PC-9 (cell line): ENCODE measurements at regions of chr14 and their contacts with region 1.

Region 1: DNA sequence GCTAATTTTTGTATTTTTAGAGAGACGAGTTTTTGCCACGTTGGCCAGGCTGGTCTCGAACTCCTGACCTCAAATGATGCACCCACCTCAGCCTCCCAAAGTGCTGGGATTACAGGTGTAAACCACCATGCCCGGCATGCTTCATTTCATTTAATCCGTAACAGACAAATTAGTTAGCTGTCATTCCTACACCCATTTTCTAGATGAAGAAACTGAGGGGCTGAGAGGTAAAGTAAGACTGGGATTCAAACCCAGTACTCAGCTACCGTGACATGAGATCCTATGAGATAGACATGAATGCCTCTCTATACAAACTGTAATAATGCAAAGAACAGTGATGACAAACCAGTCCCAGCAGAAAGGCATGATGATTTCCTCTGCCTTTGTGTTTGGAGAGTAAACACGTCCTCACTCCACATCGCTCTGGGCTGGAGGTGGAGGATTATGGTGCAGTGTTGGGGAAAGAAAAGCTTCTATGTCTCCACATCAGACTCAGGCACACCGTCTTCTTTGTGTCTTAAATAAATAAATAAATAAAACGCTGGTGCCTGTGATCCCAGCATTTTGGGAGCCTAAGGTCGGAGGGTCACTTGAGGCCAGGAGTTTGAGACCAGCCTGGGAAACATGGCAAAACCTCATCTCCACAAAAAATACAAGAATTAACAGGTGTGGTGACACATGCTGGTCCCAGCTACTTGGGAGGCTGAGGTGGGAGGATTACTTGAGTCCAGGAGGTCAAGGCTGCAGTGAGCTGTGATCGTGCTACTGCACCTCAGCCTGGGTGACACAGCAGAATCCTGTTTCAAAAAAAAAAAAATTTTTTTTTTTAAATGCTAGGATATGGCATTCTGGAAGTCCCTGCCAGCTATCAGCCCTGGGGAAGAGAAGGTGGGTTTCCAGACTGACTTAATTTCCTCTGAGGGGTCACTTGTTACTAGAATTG is 10.5 kb downstream of the VSX2 start:
- DNase-seq: no peak
- H3K4me3 ChIP-seq: no peak overlapping the region
- H3K27ac ChIP-seq: no peak overlapping the region
- H3K4me1 ChIP-seq: no peaks in the 10 kb centered on the region
- H3K27me3 ChIP-seq: peaks cover 4% of the 10 kb centered on the region
- CTCF ChIP-seq: no peak

Region 2: DNA sequence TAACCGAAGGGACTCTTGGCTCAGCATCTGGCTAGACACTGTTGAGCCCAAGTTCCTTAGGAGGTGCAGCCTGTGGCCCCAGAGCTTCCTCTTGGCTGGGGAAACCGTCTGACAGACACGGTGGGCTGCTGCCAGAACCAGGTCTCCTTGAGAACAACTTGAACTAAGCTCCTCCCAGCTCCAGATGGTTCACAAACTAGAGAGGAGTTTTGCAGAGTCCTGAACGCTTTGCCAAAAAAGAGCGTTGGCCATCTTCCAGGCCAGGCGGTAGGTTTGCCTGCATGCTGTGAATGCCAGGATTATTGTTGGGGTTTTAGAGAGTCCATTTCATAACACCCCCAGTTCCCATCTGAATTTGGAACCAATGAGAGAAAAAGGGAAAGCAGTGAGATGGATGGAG is 1917.7 kb before region 1 on chr14:
- CTCF ChIA-PET with region 1: no interaction called
- POLR2A ChIA-PET with region 1: no interaction called
- intact Hi-C with region 1: no loop called
- DNase-seq: no peak
- H3K4me3 ChIP-seq: no peak overlapping the region
- H3K27ac ChIP-seq: no peak overlapping the region
- H3K4me1 ChIP-seq: no peaks in the 10 kb centered on the region
- H3K27me3 ChIP-seq: peaks cover 36% of the 10 kb centered on the region
- CTCF ChIP-seq: no peak

Region 3: DNA sequence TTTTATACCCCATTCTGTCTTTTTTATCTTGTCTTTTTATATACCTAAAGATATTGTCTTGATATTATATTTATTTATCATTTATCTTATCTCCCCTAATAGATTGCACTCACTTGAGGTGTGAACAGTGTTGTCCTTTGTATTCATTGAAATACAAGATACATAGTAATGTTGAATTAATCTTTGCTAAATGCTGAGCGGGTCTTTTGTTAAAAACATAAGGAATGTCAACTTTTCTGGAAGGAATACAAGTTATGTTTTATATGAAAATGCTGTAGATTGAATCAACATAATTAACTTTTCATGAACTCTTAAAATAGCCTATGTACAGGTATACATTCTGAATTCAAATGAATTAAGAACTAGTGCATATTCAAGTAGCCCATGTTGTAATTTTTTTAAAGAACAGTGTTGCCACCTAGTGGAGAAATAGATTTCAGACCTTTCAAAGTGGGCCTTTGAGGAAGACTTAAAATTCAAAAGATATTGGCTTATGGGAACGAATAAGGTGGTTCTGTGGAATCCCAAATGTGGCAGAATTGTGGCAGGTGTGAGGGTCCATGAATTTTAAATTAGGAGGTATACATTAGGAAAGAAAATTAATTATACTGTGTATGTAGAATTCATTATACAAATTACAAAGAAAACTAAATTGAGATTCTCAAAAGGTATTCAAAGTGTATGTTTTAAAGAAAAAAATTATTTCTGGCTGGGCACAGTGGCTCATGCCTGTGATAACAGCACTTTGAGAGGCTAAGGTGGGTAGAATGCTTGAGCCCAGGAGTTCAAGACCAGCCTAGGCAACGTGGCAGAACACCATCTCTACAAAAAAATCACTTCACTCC is 211.5 kb before region 1 on chr14:
- CTCF ChIA-PET with region 1: no interaction called
- POLR2A ChIA-PET with region 1: no interaction called
- intact Hi-C with region 1: loop called (anchors 5 kb)
- DNase-seq: peak in 1 of 2 experiments; percentile 66
- H3K4me3 ChIP-seq: no peak overlapping the region
- H3K27ac ChIP-seq: no peak overlapping the region
- H3K4me1 ChIP-seq: no peaks in the 10 kb centered on the region
- H3K27me3 ChIP-seq: no peaks in the 10 kb centered on the region
- CTCF ChIP-seq: peak; percentile 96

Region 4: GRCh38 chr14:74217672-74218448 is 31.8 kb before region 1 on chr14:
- CTCF ChIA-PET with region 1: interaction called, 13 read pairs
- POLR2A ChIA-PET with region 1: no interaction called
- intact Hi-C with region 1: loop called (anchors 2 kb)
- DNase-seq: peak; percentile 58 to 92
- H3K4me3 ChIP-seq: peak overlapping the region; percentile 10; the same call in 1 of the 2 replicates
- H3K27ac ChIP-seq: no peak overlapping the region
- H3K4me1 ChIP-seq: no peaks in the 10 kb centered on the region
- H3K27me3 ChIP-seq: peaks cover 40% of the 10 kb centered on the region
- CTCF ChIP-seq: peak; percentile 96

Region 5: GRCh38 chr14:74267588-74267987 is 17.9 kb after region 1 on chr14:
- CTCF ChIA-PET with region 1: interaction called, 5 read pairs
- POLR2A ChIA-PET with region 1: interaction called, 13 read pairs
- intact Hi-C with region 1: no loop called
- DNase-seq: no peak
- H3K4me3 ChIP-seq: no peak overlapping the region
- H3K27ac ChIP-seq: no peak overlapping the region
- H3K4me1 ChIP-seq: peaks cover 12% of the 10 kb centered on the region
- H3K27me3 ChIP-seq: no peaks in the 10 kb centered on the region
- CTCF ChIP-seq: no peak

Region 6: GRCh38 chr14:74401504-74402241 is 152.0 kb after region 1 on chr14:
- CTCF ChIA-PET with region 1: no interaction called
- POLR2A ChIA-PET with region 1: no interaction called
- intact Hi-C with region 1: no loop called
- DNase-seq: peak; percentile 70 to 74
- H3K4me3 ChIP-seq: peak overlapping the region; percentile 52
- H3K27ac ChIP-seq: peak overlapping the region; percentile 76
- H3K4me1 ChIP-seq: peaks cover 32% of the 10 kb centered on the region
- H3K27me3 ChIP-seq: no peaks in the 10 kb centered on the region
- CTCF ChIP-seq: 0 out of 2 replicates have a peak, but pooled peaks have one; percentile 18

Region 7: GRCh38 chr14:74459289-74459946 is 209.7 kb after region 1 on chr14:
- CTCF ChIA-PET with region 1: no interaction called
- POLR2A ChIA-PET with region 1: no interaction called
- intact Hi-C with region 1: no loop called
- DNase-seq: peak in 1 of 2 experiments; percentile 65
- H3K4me3 ChIP-seq: no peak overlapping the region
- H3K27ac ChIP-seq: no peak overlapping the region
- H3K4me1 ChIP-seq: peaks cover 7% of the 10 kb centered on the region
- H3K27me3 ChIP-seq: no peaks in the 10 kb centered on the region
- CTCF ChIP-seq: peak; percentile 72